ENCODE measurements at regions of chr3 and their contacts with region 1.

Region 1: GRCh38 chr3:120095226-120095978 is 1.2 kb upstream of the GSK3B start:
- DNase-seq: peak; percentile 71 to 90 (median 79)
- ATAC-seq: peak; percentile 37
- H3K4me3 ChIP-seq: peak overlapping the region; percentile 69
- H3K4me3 Mint-ChIP-seq: no peak overlapping the region
- H3K27ac ChIP-seq: peak overlapping the region; percentile 92
- H3K27ac Mint-ChIP-seq: peak overlapping the region in 1 of 9 donors; percentile 99
- H3K4me1 ChIP-seq: peaks cover 11 to 26% of the 10 kb centered on the region in 2 donors
- H3K4me1 Mint-ChIP-seq: peaks cover 16 to 38% (median 31%) of the 10 kb centered on the region in 7 donors
- H3K27me3 ChIP-seq: no peaks in the 10 kb centered on the region
- H3K27me3 Mint-ChIP-seq: peaks cover 0 to 5% (median 0%) of the 10 kb centered on the region in 5 donors

Region 2: GRCh38 chr3:119293871-119294695 is 801.3 kb before region 1 on chr3 and contains the start of gene ARHGAP31:
- CTCF ChIA-PET with region 1: no interaction called
- POLR2A ChIA-PET with region 1: no interaction called
- intact Hi-C with region 1: loop called (anchors 1 to 2 kb)
- DNase-seq: peak; percentile 70 to 91 (median 86)
- ATAC-seq: peak; percentile 77
- H3K4me3 ChIP-seq: peak within 1 kb of the TSS; percentile 50
- H3K4me3 Mint-ChIP-seq: peak within 1 kb of the TSS; percentile 68 to 95 (median 90)
- H3K27ac ChIP-seq: peak within 1 kb of the TSS; percentile 91
- H3K27ac Mint-ChIP-seq: peak within 1 kb of the TSS; percentile 71 to 99 (median 92)
- H3K4me1 ChIP-seq: peaks cover 22 to 26% of the 10 kb centered on the region in 2 donors
- H3K4me1 Mint-ChIP-seq: peaks cover 26 to 74% (median 63%) of the 10 kb centered on the region in 7 donors
- H3K27me3 ChIP-seq: no peaks in the 10 kb centered on the region
- H3K27me3 Mint-ChIP-seq: peaks cover 0 to 43% (median 0%) of the 10 kb centered on the region in 5 donors
- total RNA-seq, gene ARHGAP31: 3.0 to 11.9 (median 3.1) TPM

Region 3: GRCh38 chr3:119637679-119638525 is 457.5 kb before region 1 on chr3:
- CTCF ChIA-PET with region 1: no interaction called
- POLR2A ChIA-PET with region 1: interaction called, 6 read pairs
- intact Hi-C with region 1: loop called in 1 of 2 experiments (anchors 1 kb)
- DNase-seq: no peak
- ATAC-seq: peak; percentile 63
- H3K4me3 ChIP-seq: no peak overlapping the region
- H3K4me3 Mint-ChIP-seq: peak overlapping the region in 1 of 10 donors; percentile 59
- H3K27ac ChIP-seq: no peak overlapping the region
- H3K27ac Mint-ChIP-seq: peak overlapping the region in 1 of 9 donors; percentile 88
- H3K4me1 ChIP-seq: no peaks in the 10 kb centered on the region
- H3K4me1 Mint-ChIP-seq: peaks cover 0 to 43% (median 0%) of the 10 kb centered on the region in 7 donors
- H3K27me3 ChIP-seq: no peaks in the 10 kb centered on the region
- H3K27me3 Mint-ChIP-seq: no peaks in the 10 kb centered on the region

Region 4: GRCh38 chr3:119891944-119892721 is 203.3 kb before region 1 on chr3:
- CTCF ChIA-PET with region 1: interaction called, 3 read pairs
- POLR2A ChIA-PET with region 1: interaction called, 6 read pairs
- intact Hi-C with region 1: loop called (anchors 1 kb)
- DNase-seq: peak in 7 of 9 donors; percentile 38 to 68 (median 60)
- ATAC-seq: peak; percentile 78
- H3K4me3 ChIP-seq: no peak overlapping the region
- H3K4me3 Mint-ChIP-seq: peak overlapping the region in 1 of 10 donors; percentile 8
- H3K27ac ChIP-seq: no peak overlapping the region
- H3K27ac Mint-ChIP-seq: peak overlapping the region in 2 of 9 donors; percentile 28 to 39
- H3K4me1 ChIP-seq: no peaks in the 10 kb centered on the region
- H3K4me1 Mint-ChIP-seq: peaks cover 2 to 19% (median 11%) of the 10 kb centered on the region in 7 donors
- H3K27me3 ChIP-seq: no peaks in the 10 kb centered on the region
- H3K27me3 Mint-ChIP-seq: no peaks in the 10 kb centered on the region

Region 5: GRCh38 chr3:120052225-120052624 is 43.2 kb before region 1 on chr3:
- CTCF ChIA-PET with region 1: no interaction called
- POLR2A ChIA-PET with region 1: interaction called, 3 read pairs
- intact Hi-C with region 1: loop called in 1 of 2 experiments (anchors 5 kb)
- DNase-seq: peak in 1 of 9 donors; percentile 11
- ATAC-seq: no peak
- H3K4me3 ChIP-seq: no peak overlapping the region
- H3K4me3 Mint-ChIP-seq: peak overlapping the region in 9 of 10 donors; percentile 8 to 72 (median 55)
- H3K27ac ChIP-seq: no peak overlapping the region
- H3K27ac Mint-ChIP-seq: peak overlapping the region in 5 of 9 donors; percentile 2 to 24 (median 6)
- H3K4me1 ChIP-seq: peaks cover 21 to 32% of the 10 kb centered on the region in 2 donors
- H3K4me1 Mint-ChIP-seq: peaks cover 34 to 94% (median 81%) of the 10 kb centered on the region in 7 donors
- H3K27me3 ChIP-seq: no peaks in the 10 kb centered on the region
- H3K27me3 Mint-ChIP-seq: no peaks in the 10 kb centered on the region

Region 6: GRCh38 chr3:120558771-120559241 is 463.4 kb after region 1 on chr3:
- CTCF ChIA-PET with region 1: no interaction called
- POLR2A ChIA-PET with region 1: no interaction called
- intact Hi-C with region 1: loop called in 1 of 2 experiments (anchors 2 kb)
- DNase-seq: peak; percentile 80 to 89 (median 88)
- ATAC-seq: peak; percentile 97
- H3K4me3 ChIP-seq: peak overlapping the region; percentile 61
- H3K4me3 Mint-ChIP-seq: peak overlapping the region; percentile 75 to 87 (median 82)
- H3K27ac ChIP-seq: peak overlapping the region; percentile 58
- H3K27ac Mint-ChIP-seq: peak overlapping the region; percentile 54 to 91 (median 83)
- H3K4me1 ChIP-seq: peaks cover 6% of the 10 kb centered on the region in 2 donors
- H3K4me1 Mint-ChIP-seq: peaks cover 6 to 23% (median 16%) of the 10 kb centered on the region in 7 donors
- H3K27me3 ChIP-seq: peaks cover 0 to 4% of the 10 kb centered on the region in 2 donors
- H3K27me3 Mint-ChIP-seq: peaks cover 0 to 13% (median 7%) of the 10 kb centered on the region in 5 donors

Region 7: DNA sequence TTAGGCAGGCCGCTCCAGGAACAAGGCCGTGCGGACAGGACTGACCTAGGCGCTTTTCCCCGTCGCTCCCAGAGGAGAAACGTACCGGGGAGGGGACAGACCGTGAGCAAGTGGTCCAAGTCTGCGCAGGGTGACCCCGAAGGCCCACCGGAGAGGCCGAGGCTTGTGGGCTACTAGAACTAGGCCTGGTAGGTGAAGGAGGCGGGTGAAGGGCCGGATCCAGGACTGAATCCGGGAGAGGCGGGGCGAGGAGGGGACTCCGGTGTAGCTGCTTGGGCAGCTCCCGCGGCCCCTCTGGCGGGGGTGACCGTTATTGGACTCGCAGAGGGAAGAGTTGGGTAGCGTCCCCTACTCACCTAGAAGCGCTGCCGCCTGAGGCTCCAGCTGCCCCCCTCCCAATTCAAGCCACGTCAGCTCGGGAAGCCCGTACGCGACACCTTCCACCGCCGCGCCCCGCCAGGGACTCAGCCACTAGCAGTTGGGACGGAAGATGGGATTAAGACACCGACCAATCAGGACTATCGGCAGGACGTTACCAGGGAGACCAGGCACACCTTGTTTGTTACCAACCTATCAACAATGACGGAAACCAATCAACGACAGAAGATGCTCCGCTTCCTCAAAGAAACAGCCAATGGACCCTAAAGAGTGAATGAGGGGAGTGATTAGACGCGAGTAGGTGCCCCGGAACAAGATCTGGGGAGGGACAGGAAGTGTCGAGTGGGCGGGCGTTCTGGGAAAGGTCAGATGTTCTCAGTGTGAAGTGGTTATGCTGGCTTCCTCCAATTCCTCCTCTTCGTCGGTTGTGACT is 1654.1 kb after region 1 on chr3 and contains the start of gene GOLGB1:
- CTCF ChIA-PET with region 1: no interaction called
- POLR2A ChIA-PET with region 1: no interaction called
- intact Hi-C with region 1: loop called in 1 of 2 experiments (anchors 5 kb)
- DNase-seq: peak; percentile 79 to 98 (median 96)
- ATAC-seq: peak; percentile 96
- H3K4me3 ChIP-seq: peak within 1 kb of the TSS; percentile 78
- H3K4me3 Mint-ChIP-seq: peak within 1 kb of the TSS in 3 of 10 donors; percentile 5 to 58 (median 39)
- H3K27ac ChIP-seq: peak within 1 kb of the TSS; percentile 96
- H3K27ac Mint-ChIP-seq: peak within 1 kb of the TSS in 2 of 9 donors; percentile 19 to 36
- H3K4me1 ChIP-seq: peaks cover 4 to 11% of the 10 kb centered on the region in 2 donors
- H3K4me1 Mint-ChIP-seq: peaks cover 5 to 18% (median 10%) of the 10 kb centered on the region in 7 donors
- H3K27me3 ChIP-seq: no peaks in the 10 kb centered on the region
- H3K27me3 Mint-ChIP-seq: peaks cover 0 to 24% (median 14%) of the 10 kb centered on the region in 5 donors
- total RNA-seq, gene GOLGB1: 29.5 to 49.7 (median 44.5) TPM